ENCODE measurements at regions of chr20 and their contacts with region 1.

Region 1: DNA sequence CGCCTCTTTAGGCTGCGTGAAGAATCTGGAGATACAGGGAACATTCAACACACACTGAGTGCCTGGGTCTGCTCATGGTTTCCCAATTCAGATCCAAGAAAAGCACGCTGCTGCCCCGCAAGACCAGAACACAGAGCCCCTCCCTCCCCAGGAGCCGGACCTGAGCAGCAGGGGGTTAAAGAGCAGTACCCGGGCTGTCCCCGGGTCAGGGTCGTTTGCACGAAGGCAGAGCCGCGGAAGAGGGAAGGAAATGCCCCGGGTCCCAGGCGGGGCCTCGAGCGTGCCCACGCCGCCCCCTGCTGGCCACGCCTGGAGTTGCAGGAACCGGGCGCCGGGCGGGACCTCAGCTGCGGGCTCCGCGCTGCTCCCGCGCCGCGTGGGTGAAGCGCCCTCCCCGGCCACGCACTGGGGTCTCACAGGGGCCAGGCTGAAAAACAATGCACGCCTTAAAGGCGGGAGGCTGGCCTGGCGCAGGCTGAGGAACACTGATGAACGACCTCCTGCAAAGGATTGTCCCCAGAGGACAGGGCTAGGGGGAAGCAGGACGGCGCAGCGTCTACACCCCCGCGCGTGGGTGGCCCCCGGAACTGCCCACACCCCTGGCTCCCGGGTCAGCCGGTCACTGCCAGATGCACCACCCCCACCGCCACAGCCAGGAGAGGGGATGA is 48.9 kb downstream of the ANKRD60 start:
- DNase-seq: peak; percentile 62
- ATAC-seq: peak; percentile 89
- H3K4me3 Mint-ChIP-seq: peak overlapping the region; percentile 40
- H3K27ac Mint-ChIP-seq: no peak overlapping the region
- H3K4me1 Mint-ChIP-seq: peaks cover 3% of the 10 kb centered on the region
- H3K27me3 Mint-ChIP-seq: peaks cover 26% of the 10 kb centered on the region

Region 2: DNA sequence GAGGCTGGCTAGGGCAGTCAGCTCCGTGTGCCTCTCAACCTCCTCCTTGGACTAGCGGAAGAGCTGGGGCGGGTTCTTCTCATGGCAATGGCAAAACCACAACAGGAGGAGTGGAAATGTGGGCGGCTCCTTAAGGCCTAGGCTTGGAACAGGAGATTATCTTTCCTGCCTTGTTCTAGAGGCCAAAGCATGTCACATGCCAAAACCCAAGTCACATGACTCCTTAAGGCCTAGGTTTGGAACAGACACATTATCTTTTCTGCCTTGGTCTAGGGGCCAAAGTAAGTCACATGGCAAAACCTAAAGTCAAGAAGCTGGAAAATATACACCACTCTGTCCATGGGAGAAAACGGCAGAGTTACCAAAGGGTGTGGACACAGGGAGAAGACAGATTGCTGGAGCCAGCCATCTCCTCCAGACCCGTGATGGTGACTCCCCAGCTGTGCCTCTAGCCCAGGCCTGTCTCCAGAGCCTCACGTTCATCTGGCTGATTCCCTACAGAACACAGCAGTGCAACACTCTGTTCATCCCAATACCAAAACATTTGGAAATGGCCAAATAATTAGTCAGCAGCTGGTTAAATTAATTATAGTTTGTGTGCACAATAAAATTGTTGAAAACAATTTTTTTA is 14.7 kb after region 1 on chr20:
- CTCF ChIA-PET with region 1: interaction called, 12 read pairs
- DNase-seq: no peak
- ATAC-seq: no peak
- H3K4me3 Mint-ChIP-seq: no peak overlapping the region
- H3K27ac Mint-ChIP-seq: no peak overlapping the region
- H3K4me1 Mint-ChIP-seq: no peaks in the 10 kb centered on the region
- H3K27me3 Mint-ChIP-seq: peaks cover 4% of the 10 kb centered on the region